ENCODE measurements at regions of chr1 and their contacts with region 1.

Region 1: DNA sequence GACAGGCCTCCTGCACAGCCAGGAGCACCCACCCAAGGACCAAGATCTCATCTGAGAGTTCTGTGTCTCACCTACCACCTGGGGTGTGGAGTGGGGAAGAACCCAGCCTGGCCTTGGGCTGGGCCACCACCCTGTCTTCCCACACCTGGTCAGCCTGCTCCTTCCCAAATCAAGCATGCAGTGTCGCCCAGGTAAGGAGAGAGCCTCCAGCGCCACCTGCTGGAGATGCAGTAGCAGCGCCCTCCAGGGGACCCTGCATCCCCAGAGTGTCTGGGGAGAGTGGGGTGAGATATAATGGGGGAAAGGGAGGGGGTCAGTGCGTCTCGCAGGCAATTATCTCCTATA is 32.3 kb downstream of the KIAA2013 start:
- DNase-seq: peak; percentile 42 to 60 (median 60)
- H3K4me3 ChIP-seq: no peak overlapping the region
- H3K4me3 Mint-ChIP-seq: no peak overlapping the region
- H3K27ac ChIP-seq: no peak overlapping the region
- H3K27ac Mint-ChIP-seq: peak overlapping the region in 1 of 7 donors; percentile 53
- H3K4me1 ChIP-seq: peaks cover 10% of the 10 kb centered on the region in 2 donors
- H3K4me1 Mint-ChIP-seq: peaks cover 12% of the 10 kb centered on the region
- H3K27me3 ChIP-seq: peaks cover 8 to 23% of the 10 kb centered on the region in 2 donors
- H3K27me3 Mint-ChIP-seq: peaks cover 31 to 35% (median 32%) of the 10 kb centered on the region in 3 donors
- CTCF ChIP-seq: peak; percentile 91

Region 2: DNA sequence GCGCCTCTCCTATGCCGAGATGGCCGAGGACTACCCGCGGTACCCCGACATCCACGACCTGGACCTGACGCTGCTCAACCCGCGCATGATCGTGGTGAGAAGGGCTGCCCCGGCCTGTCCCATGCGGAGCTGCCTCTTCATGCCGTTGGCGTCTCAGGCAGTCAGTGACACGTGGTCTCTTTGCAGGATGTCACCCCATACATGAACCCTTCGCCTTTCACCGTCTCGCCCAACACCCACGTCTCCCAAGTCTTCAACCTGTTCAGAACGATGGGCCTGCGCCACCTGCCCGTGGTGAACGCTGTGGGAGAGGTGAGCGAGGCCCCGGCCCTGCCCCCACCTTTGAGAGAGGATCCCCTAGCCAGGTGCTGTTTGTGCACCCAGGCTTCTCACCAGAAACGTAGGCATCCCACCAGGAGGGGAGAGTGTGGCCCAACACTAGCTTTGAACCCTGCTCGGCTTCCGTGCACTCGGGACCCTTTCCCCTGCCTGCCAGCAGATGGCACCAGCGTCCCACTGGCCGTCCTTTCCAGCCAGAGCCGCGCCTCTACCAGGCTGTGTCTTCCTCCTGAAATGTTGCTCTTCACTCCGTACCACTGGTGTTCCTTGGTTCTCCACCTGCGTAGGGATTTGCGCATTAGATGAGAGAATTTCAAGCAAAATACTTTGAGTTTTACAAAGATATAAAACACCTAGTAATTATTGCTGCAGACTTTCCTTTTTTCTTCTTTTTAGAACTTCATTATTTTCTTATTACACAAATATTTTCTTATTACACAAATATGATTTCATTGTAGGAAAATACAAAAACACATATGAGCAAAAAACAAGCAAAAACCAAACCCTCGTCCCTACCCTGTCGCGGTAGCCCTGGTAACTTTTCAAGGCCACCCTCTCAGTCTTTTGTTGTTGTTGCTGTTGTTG is 55.3 kb before region 1 on chr1:
- intact Hi-C with region 1: loop called (anchors 1 to 2 kb)
- DNase-seq: peak; percentile 51 to 64 (median 58)
- H3K4me3 ChIP-seq: no peak overlapping the region
- H3K4me3 Mint-ChIP-seq: no peak overlapping the region
- H3K27ac ChIP-seq: no peak overlapping the region
- H3K27ac Mint-ChIP-seq: peak overlapping the region in 4 of 7 donors; percentile 4 to 66 (median 43)
- H3K4me1 ChIP-seq: peaks cover 27 to 29% of the 10 kb centered on the region in 2 donors
- H3K4me1 Mint-ChIP-seq: peaks cover 31% of the 10 kb centered on the region
- H3K27me3 ChIP-seq: no peaks in the 10 kb centered on the region
- H3K27me3 Mint-ChIP-seq: no peaks in the 10 kb centered on the region
- CTCF ChIP-seq: peak; percentile 99

Measured in CD14-positive monocyte (primary cell).